ENCODE measurements at regions of chr11 and their contacts with region 1.

Region 1: DNA sequence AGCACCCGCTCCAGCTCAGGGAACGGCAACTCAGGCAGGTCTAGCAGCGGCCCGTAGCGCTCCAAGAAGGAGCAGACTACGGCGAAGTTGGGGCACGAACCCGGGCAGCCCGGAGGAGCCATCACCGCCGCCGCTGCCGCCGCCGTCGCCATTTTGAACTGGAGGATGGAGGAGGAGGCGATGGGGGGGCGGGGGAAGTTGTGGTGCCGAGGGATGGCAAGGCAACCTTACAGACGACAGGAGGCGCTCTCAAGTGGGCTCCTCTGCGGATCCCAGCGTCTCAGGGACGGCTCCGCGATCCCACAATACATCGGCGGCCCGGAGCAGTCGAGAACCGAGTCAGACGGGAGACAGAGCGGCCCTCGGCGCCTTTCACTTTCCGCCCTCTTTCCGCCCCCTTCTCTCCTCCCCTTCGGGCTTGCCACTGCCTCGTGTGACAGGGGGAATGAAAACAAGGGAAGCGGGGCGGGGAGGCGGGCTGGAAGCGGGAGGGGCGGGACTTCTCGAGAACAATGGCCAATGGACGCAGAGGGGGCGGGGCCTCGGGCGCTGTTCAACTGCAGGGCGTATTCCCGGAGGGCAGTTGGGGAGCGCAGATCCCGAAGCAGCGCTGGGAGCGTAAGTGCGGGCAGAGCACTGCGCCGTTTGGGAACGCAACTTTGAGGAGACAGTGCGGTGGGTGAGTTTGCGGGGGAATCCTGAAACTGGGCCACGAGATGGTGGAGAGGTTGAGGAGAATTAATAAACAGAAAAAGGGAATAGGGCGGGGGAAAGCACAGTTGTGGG is at the starts of genes AAMDC and RSF1:
- DNase-seq: peak; percentile 99
- total RNA-seq, gene AAMDC: 38.5 TPM
- total RNA-seq, gene RSF1: 52.3 TPM

Region 2: GRCh38 chr11:77340501-77340900 is 480.3 kb before region 1 on chr11:
- intact Hi-C with region 1: no loop called
- DNase-seq: no peak

Region 3: DNA sequence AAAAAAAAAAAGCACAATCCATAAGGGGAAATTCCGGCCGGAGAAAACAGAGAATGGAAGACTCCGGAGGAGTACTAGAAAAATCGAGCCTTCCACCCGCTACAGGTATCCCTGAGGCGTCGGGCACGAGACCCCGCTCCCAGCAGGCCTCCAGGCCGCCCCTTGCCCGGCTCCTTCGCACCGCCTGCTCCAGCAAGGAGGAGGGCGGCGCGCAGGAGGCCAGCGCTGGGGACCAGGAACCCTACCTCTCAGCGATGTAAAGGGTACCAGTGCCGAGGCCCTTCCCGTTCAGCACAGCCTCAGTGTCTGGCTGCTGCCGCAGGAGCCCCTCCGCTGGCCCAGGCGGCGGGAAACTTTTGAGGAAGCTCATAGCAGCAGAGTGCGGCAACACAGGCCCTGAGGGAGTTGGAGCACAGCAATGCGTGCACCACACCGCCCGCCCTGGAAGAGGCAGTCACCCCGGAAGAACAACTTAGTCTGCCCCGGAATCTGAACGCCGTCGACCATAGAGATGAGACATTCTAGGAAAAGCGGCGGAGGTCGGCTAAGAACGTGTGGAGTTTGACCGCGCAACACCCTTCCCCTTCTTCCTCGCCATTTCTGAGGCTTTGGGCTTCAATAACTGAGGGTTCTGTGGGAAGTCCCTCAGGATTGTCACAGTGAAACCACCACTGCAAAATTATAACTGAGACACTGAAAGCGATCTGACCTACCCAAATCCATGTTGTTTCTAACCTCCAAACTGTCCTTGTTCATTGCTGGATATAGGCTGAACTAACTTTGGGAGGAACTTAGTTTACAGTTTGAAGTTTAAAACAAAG is 183.2 kb before region 1 on chr11 and contains the start of gene CLNS1A:
- intact Hi-C with region 1: loop called (anchors 2 kb)
- DNase-seq: peak; percentile 94
- total RNA-seq, gene CLNS1A: 71.7 TPM

Region 4: DNA sequence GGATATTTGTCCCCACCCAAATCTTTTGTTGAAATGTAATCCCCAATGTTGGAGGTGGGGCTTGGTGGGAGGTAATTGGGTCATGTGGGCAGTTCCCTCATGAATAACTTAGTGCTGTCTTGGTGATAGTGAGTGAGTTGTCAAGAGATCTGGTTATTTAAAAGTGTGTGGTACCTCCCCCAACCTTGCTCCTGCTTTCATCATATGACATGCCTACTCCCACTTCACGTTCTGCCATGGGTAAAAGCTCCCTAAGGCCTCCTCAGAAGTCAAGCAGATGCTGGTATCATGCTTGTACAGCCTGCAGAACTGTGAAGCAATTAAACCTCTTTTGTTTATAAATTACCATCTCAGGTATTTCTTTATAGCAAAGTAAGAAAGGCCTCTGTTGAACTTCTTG is 30.7 kb after region 1 on chr11:
- intact Hi-C with region 1: no loop called
- DNase-seq: no peak

Region 5: DNA sequence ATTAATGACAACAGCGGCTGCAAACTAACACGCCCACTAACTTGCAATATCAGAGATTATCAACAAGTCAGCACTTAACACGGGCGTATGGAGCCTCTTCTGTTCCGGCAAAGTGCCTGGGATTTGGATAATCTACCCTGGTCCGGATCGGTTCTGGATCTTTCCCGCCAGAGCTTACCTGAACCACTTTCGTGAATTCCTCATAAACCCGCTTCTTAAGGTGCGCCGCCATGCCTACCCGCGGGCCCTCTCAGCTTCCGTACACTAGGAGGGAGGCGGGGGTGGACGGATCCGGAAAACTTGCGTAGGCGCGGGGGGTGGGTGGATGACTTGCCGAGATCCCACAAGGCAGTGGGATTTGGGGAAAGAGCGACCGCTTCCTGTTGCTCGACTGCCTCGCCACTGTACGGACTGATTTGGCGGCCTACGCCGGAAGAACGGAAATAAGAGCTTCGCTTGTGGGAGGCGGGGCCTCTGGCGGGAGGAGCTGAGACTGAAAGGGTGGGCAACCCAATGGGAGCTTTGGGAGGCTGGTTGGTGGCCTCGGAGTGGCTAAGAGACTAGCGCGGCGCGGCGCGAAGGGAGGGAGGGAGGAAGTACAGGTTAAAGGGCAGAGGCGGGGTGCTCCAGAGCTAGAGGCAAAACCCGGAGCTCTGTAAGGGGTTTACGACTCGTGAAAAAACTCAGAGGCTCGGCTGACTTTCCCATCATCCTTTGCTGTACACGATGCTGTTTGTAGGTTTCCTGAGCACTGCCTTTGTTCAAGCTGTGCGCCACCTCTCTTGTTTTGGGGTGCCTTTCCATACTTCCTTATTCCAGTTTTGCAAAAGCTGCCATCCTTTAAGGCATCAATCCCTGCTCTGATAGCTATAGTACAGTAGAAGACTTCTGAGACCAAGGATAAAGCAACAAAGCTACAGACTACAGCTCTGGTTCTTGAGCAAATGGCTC is 173.9 kb after region 1 on chr11 and contains the start of gene INTS4:
- intact Hi-C with region 1: loop called (anchors 1 kb)
- DNase-seq: peak; percentile 99
- total RNA-seq, gene INTS4: 19.3 TPM

Region 6: GRCh38 chr11:78045851-78046485 is 225.2 kb after region 1 on chr11:
- intact Hi-C with region 1: loop called (anchors 5 kb)
- DNase-seq: peak; percentile 89

Measured in cardiac septum (tissue), 1 donor.